ENCODE measurements at regions of chr18 and their contacts with region 1.

Region 1: DNA sequence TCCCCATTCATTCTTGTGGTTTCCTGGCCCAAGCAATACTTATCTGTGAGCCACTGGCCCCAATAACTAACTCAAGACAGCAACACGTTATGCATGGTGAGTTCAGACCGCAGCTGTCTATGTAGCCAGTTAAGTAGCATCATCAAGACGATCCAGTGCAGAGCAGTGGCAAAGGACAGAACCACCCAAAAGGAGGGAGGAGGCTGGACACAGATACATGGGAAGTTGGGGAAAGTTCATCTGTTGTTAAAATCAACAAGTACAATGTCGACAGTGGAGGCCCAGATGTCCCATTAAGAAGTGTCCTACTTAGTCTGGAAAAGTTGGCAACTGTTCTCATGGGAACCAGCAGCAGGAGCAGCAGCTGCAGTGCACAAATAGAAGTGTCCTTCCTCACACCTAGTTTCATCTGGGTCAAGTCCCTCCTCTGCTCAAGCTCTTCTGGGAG is 106.9 kb upstream of the THOC1 start:
- DNase-seq: peak in 3 of 5 donors; percentile 13 to 38 (median 33)
- ATAC-seq: peak; percentile 10 to 55 (median 38)
- H3K4me3 ChIP-seq: no peak overlapping the region
- H3K27ac ChIP-seq: peak overlapping the region in 8 of 12 donors; percentile 6 to 60 (median 38)
- H3K4me1 ChIP-seq: peaks cover 0 to 92% (median 31%) of the 10 kb centered on the region in 12 donors
- H3K27me3 ChIP-seq: no peaks in the 10 kb centered on the region
- CTCF ChIP-seq: no peak
- POLR2A ChIP-seq: no peak

Region 2: GRCh38 chr18:457140-457519 is 82.4 kb after region 1 on chr18:
- intact Hi-C with region 1: loop called in 2 of 10 experiments (anchors 10 kb)
- DNase-seq: peak; percentile 54 to 79 (median 69)
- ATAC-seq: peak; percentile 82 to 90 (median 90)
- H3K4me3 ChIP-seq: peak overlapping the region in 9 of 12 donors; percentile 0 to 47 (median 17)
- H3K27ac ChIP-seq: peak overlapping the region; percentile 43 to 79 (median 68)
- H3K4me1 ChIP-seq: peaks cover 0 to 52% (median 24%) of the 10 kb centered on the region in 12 donors
- H3K27me3 ChIP-seq: no peaks in the 10 kb centered on the region
- CTCF ChIP-seq: no peak
- POLR2A ChIP-seq: no peak

Measured in heart left ventricle (tissue), 16 donors.